ENCODE measurements at regions of chr12 and their contacts with region 1.

Region 1: GRCh38 chr12:106841510-106842302 is 67.2 kb downstream of the RIC8B start:
- DNase-seq: no peak
- H3K4me3 Mint-ChIP-seq: no peak overlapping the region
- H3K27ac Mint-ChIP-seq: no peak overlapping the region
- H3K4me1 Mint-ChIP-seq: peaks cover 10% of the 10 kb centered on the region
- H3K27me3 Mint-ChIP-seq: no peaks in the 10 kb centered on the region

Region 2: GRCh38 chr12:106386813-106387535 is 454.7 kb before region 1 on chr12:
- intact Hi-C with region 1: loop called (anchors 5 kb)
- DNase-seq: no peak
- H3K4me3 Mint-ChIP-seq: no peak overlapping the region
- H3K27ac Mint-ChIP-seq: no peak overlapping the region
- H3K4me1 Mint-ChIP-seq: peaks cover 5% of the 10 kb centered on the region
- H3K27me3 Mint-ChIP-seq: no peaks in the 10 kb centered on the region

Region 3: GRCh38 chr12:106581543-106582248 is 260.0 kb before region 1 on chr12:
- intact Hi-C with region 1: loop called (anchors 10 kb)
- DNase-seq: no peak
- H3K4me3 Mint-ChIP-seq: no peak overlapping the region
- H3K27ac Mint-ChIP-seq: no peak overlapping the region
- H3K4me1 Mint-ChIP-seq: peaks cover 15% of the 10 kb centered on the region
- H3K27me3 Mint-ChIP-seq: peaks cover 79% of the 10 kb centered on the region

Region 4: DNA sequence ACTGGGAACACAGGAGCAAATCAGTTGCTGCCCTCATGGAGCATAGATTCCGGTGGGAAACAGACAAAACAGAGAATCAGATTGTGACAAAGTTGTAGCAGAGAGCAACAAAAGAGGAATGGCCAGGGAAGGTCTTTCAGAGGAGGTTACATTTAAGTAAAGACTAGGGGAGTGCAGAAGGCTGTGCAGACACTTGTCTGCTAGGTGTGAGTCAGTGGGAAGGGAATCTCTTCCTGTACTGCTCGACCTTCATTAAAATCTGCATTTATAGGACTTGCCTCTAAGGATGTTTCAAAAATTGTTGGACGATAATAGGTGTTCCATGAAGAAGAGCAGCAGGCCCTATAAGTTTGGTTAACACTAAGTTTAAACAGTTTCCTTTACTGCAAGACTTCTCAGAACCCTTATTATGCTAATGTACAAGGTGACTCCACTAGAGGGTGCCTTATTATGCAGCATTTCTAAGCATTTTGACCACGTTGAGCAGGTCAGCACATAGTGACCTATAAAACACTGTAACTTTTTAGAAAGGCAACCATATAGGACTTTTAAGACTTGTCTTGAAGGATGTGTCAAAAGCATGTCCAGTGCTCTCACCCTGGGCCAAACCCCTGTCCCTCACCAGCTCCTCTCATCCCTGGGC is 159.0 kb before region 1 on chr12:
- intact Hi-C with region 1: loop called (anchors 5 kb)
- DNase-seq: no peak
- H3K4me3 Mint-ChIP-seq: no peak overlapping the region
- H3K27ac Mint-ChIP-seq: no peak overlapping the region
- H3K4me1 Mint-ChIP-seq: no peaks in the 10 kb centered on the region
- H3K27me3 Mint-ChIP-seq: peaks cover 1% of the 10 kb centered on the region